ENCODE measurements at regions of chr6 and their contacts with region 1.

Region 1: GRCh38 chr6:7312616-7313504 is at the start of gene SSR1:
- DNase-seq: peak; percentile 97
- H3K4me3 Mint-ChIP-seq: peak within 1 kb of the TSS; percentile 92
- H3K27ac Mint-ChIP-seq: peak within 1 kb of the TSS; percentile 95
- H3K4me1 Mint-ChIP-seq: peaks cover 40% of the 10 kb centered on the region
- H3K27me3 Mint-ChIP-seq: no peaks in the 10 kb centered on the region
- total RNA-seq, gene SSR1: 156 to 164 TPM

Region 2: GRCh38 chr6:7282097-7282906 is 30.6 kb before region 1 on chr6:
- CTCF ChIA-PET with region 1: no interaction called
- POLR2A ChIA-PET with region 1: no interaction called
- intact Hi-C with region 1: loop called (anchors 2 kb)
- DNase-seq: peak; percentile 41
- H3K4me3 Mint-ChIP-seq: no peak overlapping the region
- H3K27ac Mint-ChIP-seq: peak overlapping the region; percentile 31
- H3K4me1 Mint-ChIP-seq: peaks cover 19% of the 10 kb centered on the region
- H3K27me3 Mint-ChIP-seq: no peaks in the 10 kb centered on the region

Measured in activated CD4-positive, alpha-beta memory T cell treated with anti-CD3 and anti-CD28 coated beads for 36 hours (primary cell).